ENCODE measurements at regions of chr9 and their contacts with region 1.

Region 1: GRCh38 chr9:6237267-6237666 is 21.7 kb downstream of the IL33 start:
- DNase-seq: no peak
- H3K4me3 Mint-ChIP-seq: no peak overlapping the region
- H3K27ac Mint-ChIP-seq: no peak overlapping the region
- H3K4me1 Mint-ChIP-seq: peaks cover 17% of the 10 kb centered on the region
- H3K27me3 Mint-ChIP-seq: no peaks in the 10 kb centered on the region
- CTCF ChIP-seq: no peak

Region 2: GRCh38 chr9:6226696-6227095 is 10.6 kb before region 1 on chr9:
- CTCF ChIA-PET with region 1: no interaction called
- POLR2A ChIA-PET with region 1: interaction called, 11 read pairs
- intact Hi-C with region 1: no loop called
- DNase-seq: peak; percentile 59
- H3K4me3 Mint-ChIP-seq: no peak overlapping the region
- H3K27ac Mint-ChIP-seq: no peak overlapping the region
- H3K4me1 Mint-ChIP-seq: peaks cover 13% of the 10 kb centered on the region
- H3K27me3 Mint-ChIP-seq: no peaks in the 10 kb centered on the region
- CTCF ChIP-seq: no peak

Region 3: DNA sequence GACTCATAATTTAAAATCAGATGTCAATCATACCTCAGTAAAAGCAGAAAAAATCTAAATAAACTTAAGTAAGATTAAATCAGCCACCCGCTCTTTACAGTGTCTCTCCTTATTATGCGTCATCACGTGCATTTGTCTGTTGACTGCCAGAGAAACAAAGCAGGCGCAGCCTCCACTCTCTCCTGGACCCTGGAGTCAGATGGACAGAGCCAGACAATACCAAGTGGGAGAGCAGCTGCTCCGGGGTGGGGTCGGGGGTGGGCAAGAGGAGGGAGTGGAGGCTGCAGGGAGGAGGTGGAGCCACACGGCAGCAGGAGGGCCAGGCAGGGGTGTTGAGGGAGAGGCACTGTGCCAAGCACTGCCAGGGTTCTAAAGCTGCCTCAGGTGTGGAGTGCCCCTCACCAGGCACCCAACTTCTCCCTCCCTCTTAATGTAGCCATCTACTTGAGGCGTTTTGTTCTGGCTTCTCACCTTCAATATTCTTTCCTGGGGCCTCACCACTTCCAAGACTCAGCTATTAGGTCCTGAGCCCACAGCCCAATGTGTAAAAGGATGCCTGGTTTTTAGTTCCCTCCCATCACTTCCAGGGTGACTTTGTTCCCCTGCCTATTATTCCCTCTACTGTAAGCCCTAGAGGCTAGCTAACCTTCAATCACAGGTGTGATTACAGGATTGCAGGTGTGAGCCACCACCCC is 312.0 kb after region 1 on chr9:
- CTCF ChIA-PET with region 1: no interaction called
- POLR2A ChIA-PET with region 1: no interaction called
- intact Hi-C with region 1: no loop called
- DNase-seq: no peak
- H3K4me3 Mint-ChIP-seq: no peak overlapping the region
- H3K27ac Mint-ChIP-seq: no peak overlapping the region
- H3K4me1 Mint-ChIP-seq: peaks cover 19% of the 10 kb centered on the region
- H3K27me3 Mint-ChIP-seq: no peaks in the 10 kb centered on the region
- CTCF ChIP-seq: no peak

Measured in MCF 10A (cell line).